CD8-positive, alpha-beta T cell (primary cell): ENCODE measurements at regions of chr19 and their contacts with region 1.

Region 1: GRCh38 chr19:3062168-3063102 is at the start of gene TLE5:
- DNase-seq: peak; percentile 46 to 88 (median 72)
- ATAC-seq: peak; percentile 46
- H3K4me3 ChIP-seq: peak within 1 kb of the TSS; percentile 92 to 95
- H3K4me3 Mint-ChIP-seq: peak within 1 kb of the TSS; percentile 92
- H3K27ac ChIP-seq: peak within 1 kb of the TSS; percentile 81 to 83
- H3K27ac Mint-ChIP-seq: peak within 1 kb of the TSS; percentile 87
- H3K4me1 ChIP-seq: peaks cover 51% of the 10 kb centered on the region
- H3K4me1 Mint-ChIP-seq: peaks cover 35% of the 10 kb centered on the region
- H3K27me3 ChIP-seq: no peaks in the 10 kb centered on the region
- H3K27me3 Mint-ChIP-seq: no peaks in the 10 kb centered on the region
- CTCF ChIP-seq: no peak
- total RNA-seq, gene TLE5: 637 to 677 TPM

Region 2: DNA sequence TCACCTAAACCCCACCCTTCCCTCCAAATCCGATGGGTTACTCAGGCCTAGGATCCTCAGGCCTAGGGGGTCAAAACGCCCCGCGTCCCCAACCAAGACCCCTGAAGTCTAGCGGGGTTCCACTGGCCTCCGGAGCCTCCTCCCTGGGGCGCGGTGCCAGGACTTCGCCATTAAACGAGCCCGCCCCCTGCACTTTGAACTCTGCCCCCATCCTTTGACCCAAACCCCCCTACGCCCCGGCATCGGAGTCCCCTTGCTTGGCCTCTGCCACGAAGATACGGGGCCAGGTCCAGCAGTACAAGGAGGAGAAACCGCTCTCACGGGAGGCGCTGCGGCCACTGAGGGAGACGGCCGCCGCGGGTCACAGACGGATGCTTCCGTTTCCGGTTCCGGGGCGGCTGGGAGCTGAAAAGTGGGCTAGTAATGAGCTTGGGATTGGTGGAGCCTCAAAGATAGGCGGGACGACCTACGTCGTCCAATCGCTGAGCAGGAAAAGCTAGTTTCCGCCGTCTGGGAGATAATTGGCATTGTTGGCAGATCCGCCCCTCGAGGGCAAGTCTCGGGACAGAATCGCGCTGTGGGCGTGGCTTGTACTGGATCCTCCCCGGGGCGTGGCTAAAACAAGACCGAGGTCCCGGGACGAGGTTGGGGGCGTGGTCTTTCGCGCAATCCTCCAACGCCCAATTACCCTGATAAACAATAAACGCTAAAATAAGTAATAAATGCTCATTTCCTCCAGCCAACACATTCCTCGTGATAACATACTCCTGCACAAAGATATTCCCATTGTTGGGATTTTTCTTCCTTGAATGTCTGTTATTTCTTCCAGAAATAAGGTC is 111.9 kb before region 1 on chr19:
- CTCF ChIA-PET with region 1: interaction called, 6 read pairs
- POLR2A ChIA-PET with region 1: interaction called, 7 read pairs
- intact Hi-C with region 1: loop called (anchors 1 to 2 kb)
- DNase-seq: peak; percentile 100
- ATAC-seq: peak; percentile 93
- H3K4me3 ChIP-seq: peak overlapping the region; percentile 77 to 80
- H3K4me3 Mint-ChIP-seq: peak overlapping the region; percentile 97
- H3K27ac ChIP-seq: peak overlapping the region; percentile 78 to 97
- H3K27ac Mint-ChIP-seq: peak overlapping the region; percentile 98
- H3K4me1 ChIP-seq: peaks cover 12% of the 10 kb centered on the region
- H3K4me1 Mint-ChIP-seq: peaks cover 32% of the 10 kb centered on the region
- H3K27me3 ChIP-seq: no peaks in the 10 kb centered on the region
- H3K27me3 Mint-ChIP-seq: no peaks in the 10 kb centered on the region
- CTCF ChIP-seq: no peak

Region 3: DNA sequence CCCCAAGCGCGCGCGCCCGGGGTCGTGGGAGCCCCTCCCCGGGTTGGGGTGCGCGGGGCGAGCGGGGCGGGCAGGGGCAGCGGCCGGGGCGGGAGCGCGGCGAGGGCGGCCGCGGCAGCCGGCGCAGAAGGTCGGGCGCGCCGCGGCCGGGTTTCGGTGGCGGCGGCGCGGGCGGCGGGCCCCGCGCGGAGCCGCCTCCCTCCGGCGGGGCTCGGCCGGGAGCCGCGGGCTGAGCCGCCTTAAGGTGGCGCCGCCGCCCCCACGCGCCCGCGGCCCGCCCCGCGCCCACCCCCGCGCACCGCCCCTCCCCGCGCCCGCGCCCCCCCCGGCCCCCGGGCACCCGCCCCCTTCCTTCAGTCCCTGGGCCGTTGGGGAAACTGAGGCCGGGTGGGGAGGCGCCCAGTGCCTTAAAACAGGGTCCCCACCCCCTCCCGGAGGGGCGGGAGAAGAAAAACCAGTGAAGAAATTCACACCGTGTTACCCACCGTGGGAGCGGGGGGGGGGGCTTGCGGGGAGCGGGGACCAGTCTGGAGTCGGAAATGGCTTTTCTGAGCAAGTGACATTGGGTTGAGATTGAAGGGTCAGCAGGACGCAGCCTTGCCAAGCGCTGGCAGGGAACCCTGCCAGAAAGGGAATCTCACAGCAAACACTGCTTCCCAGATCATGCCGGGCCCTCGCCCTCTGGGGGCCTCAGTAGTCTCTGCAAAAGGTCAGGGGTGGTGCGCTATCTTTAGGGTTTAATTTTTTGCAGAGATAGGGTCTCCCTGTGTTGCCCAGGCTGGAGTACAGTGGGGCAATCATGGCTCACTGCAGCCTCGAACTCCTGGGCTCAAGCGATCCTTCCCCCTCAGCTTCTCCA is 33.1 kb before region 1 on chr19 and contains the start of gene TLE2:
- CTCF ChIA-PET with region 1: interaction called, 3 read pairs
- POLR2A ChIA-PET with region 1: interaction called, 8 read pairs
- intact Hi-C with region 1: loop called in 1 of 2 experiments (anchors 5 kb)
- DNase-seq: peak in 2 of 9 experiments; percentile 58 to 63
- ATAC-seq: peak; percentile 69
- H3K4me3 ChIP-seq: peak within 1 kb of the TSS; percentile 57 to 60
- H3K4me3 Mint-ChIP-seq: peak within 1 kb of the TSS; percentile 82
- H3K27ac ChIP-seq: peak within 1 kb of the TSS in 1 of 2 experiments; percentile 37
- H3K27ac Mint-ChIP-seq: peak within 1 kb of the TSS; percentile 67
- H3K4me1 ChIP-seq: peaks cover 31% of the 10 kb centered on the region
- H3K4me1 Mint-ChIP-seq: peaks cover 27% of the 10 kb centered on the region
- H3K27me3 ChIP-seq: no peaks in the 10 kb centered on the region
- H3K27me3 Mint-ChIP-seq: no peaks in the 10 kb centered on the region
- CTCF ChIP-seq: no peak
- total RNA-seq, gene TLE2: 12.1 to 15.4 TPM

Region 4: GRCh38 chr19:3047425-3048189 is 14.8 kb before region 1 on chr19:
- CTCF ChIA-PET with region 1: interaction called, 7 read pairs
- POLR2A ChIA-PET with region 1: interaction called, 35 read pairs
- intact Hi-C with region 1: loop called (anchors 1 to 2 kb)
- DNase-seq: peak in 8 of 9 experiments; percentile 44 to 81 (median 72)
- ATAC-seq: peak; percentile 94
- H3K4me3 ChIP-seq: peak overlapping the region; percentile 41 to 43
- H3K4me3 Mint-ChIP-seq: peak overlapping the region; percentile 89
- H3K27ac ChIP-seq: no peak overlapping the region
- H3K27ac Mint-ChIP-seq: peak overlapping the region; percentile 93
- H3K4me1 ChIP-seq: peaks cover 14% of the 10 kb centered on the region
- H3K4me1 Mint-ChIP-seq: peaks cover 20% of the 10 kb centered on the region
- H3K27me3 ChIP-seq: no peaks in the 10 kb centered on the region
- H3K27me3 Mint-ChIP-seq: no peaks in the 10 kb centered on the region
- CTCF ChIP-seq: no peak

Region 5: DNA sequence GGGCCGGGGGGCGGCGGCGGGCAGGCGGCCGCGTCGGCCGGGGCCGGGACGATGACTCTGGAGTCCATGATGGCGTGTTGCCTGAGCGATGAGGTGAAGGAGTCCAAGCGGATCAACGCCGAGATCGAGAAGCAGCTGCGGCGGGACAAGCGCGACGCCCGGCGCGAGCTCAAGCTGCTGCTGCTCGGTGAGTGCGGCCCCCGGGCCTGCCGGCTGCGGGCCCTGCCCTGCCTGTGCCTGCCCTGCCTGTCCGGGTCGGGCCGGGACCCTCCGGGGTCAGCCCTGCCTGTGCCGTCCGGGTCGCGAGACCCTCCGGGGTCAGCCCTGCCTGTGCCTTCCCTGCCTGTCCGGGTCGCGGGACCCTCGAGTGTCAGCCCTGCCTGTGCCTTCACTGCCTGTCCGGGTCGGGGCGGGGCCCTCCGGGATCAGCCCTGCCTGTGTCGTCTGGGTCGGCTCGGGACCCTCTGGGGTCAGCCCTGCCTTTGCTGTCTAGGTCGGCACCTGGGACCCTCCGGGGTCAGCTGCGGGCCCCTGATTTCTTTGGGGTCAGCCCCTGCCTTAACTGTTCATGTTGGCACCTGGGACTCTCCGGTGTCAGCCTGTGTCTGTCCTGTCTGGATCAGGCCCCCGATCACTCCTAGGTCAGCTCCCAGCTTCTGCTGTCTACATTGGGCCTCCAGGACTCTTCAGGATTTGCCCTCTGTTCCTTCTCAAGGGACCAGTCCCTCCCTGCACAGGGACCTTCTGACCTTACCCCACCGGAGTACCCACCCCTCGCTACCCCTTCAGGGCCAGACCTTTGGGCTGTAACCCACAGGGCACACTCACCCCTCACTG is 32.4 kb after region 1 on chr19:
- CTCF ChIA-PET with region 1: no interaction called
- POLR2A ChIA-PET with region 1: no interaction called
- intact Hi-C with region 1: loop called in 1 of 2 experiments (anchors 2 kb)
- DNase-seq: peak in 4 of 9 experiments; percentile 43 to 59 (median 58)
- ATAC-seq: peak; percentile 6
- H3K4me3 ChIP-seq: peak overlapping the region; percentile 34 to 62
- H3K4me3 Mint-ChIP-seq: peak overlapping the region; percentile 77
- H3K27ac ChIP-seq: no peak overlapping the region
- H3K27ac Mint-ChIP-seq: peak overlapping the region; percentile 60
- H3K4me1 ChIP-seq: peaks cover 42% of the 10 kb centered on the region
- H3K4me1 Mint-ChIP-seq: peaks cover 24% of the 10 kb centered on the region
- H3K27me3 ChIP-seq: peaks cover 0 to 20% of the 10 kb centered on the region in 2 experiments
- H3K27me3 Mint-ChIP-seq: peaks cover 6% of the 10 kb centered on the region
- CTCF ChIP-seq: no peak

Region 6: GRCh38 chr19:3122958-3123721 is 60.7 kb after region 1 on chr19:
- CTCF ChIA-PET with region 1: no interaction called
- POLR2A ChIA-PET with region 1: no interaction called
- intact Hi-C with region 1: no loop called
- DNase-seq: no peak
- ATAC-seq: no peak
- H3K4me3 ChIP-seq: no peak overlapping the region
- H3K4me3 Mint-ChIP-seq: no peak overlapping the region
- H3K27ac ChIP-seq: no peak overlapping the region
- H3K27ac Mint-ChIP-seq: no peak overlapping the region
- H3K4me1 ChIP-seq: no peaks in the 10 kb centered on the region
- H3K4me1 Mint-ChIP-seq: no peaks in the 10 kb centered on the region
- H3K27me3 ChIP-seq: peaks cover 0 to 3% of the 10 kb centered on the region in 2 experiments
- H3K27me3 Mint-ChIP-seq: peaks cover 2% of the 10 kb centered on the region
- CTCF ChIP-seq: no peak

Region 7: GRCh38 chr19:3163230-3163886 is 100.9 kb after region 1 on chr19:
- CTCF ChIA-PET with region 1: no interaction called
- POLR2A ChIA-PET with region 1: no interaction called
- intact Hi-C with region 1: no loop called
- DNase-seq: peak; percentile 46 to 85 (median 75)
- ATAC-seq: peak; percentile 97
- H3K4me3 ChIP-seq: no peak overlapping the region
- H3K4me3 Mint-ChIP-seq: no peak overlapping the region
- H3K27ac ChIP-seq: no peak overlapping the region
- H3K27ac Mint-ChIP-seq: peak overlapping the region; percentile 14
- H3K4me1 ChIP-seq: no peaks in the 10 kb centered on the region
- H3K4me1 Mint-ChIP-seq: peaks cover 14% of the 10 kb centered on the region
- H3K27me3 ChIP-seq: no peaks in the 10 kb centered on the region
- H3K27me3 Mint-ChIP-seq: no peaks in the 10 kb centered on the region
- CTCF ChIP-seq: peak; percentile 89

Region 8: DNA sequence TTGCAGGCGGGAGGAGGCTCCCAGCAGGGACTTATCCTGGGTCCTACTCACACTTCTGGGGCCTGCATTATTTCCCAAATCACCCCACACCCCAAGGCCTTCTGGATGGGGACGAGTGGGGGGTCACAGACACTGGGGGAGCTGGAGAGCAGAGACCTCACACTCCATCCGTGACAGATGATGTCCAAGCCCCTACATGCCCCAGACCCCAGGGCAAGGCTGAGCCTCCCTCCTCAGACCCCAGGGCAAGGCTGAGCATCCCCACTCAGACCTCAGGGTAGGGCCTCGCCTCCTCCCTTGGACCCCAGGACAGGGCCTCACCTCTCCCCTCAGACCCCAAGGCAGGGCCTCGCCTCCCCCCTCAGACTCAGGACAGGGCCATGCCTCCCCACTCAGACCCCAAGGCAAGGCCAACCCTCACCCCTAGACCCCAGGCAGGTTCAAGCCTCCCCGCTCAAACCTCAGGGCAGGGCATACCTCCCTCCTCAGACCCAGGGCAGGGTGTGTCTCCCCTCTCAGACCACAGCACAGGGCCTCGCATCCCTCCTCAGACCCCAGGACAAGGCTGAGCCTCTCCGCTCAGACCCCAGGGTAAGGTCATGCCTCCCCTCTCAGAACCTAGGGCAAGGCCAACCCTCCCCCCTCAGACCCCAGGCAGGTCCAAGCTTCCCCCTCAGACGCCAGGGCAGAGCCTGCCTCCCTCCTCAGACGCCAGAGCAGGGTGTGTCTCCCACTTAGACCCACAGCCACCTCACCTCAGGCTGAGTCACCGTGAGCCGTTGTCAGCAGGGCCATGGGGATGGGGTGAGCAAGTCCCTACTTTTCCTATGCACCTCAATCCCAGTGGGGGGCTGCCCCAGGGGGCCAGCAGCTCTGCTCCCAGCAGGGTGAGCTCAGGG is 114.4 kb after region 1 on chr19:
- CTCF ChIA-PET with region 1: no interaction called
- POLR2A ChIA-PET with region 1: interaction called, 3 read pairs
- intact Hi-C with region 1: loop called in 1 of 2 experiments (anchors 2 kb)
- DNase-seq: peak; percentile 43 to 86 (median 82)
- ATAC-seq: peak; percentile 68
- H3K4me3 ChIP-seq: peak overlapping the region; percentile 45 to 66
- H3K4me3 Mint-ChIP-seq: peak overlapping the region; percentile 62
- H3K27ac ChIP-seq: peak overlapping the region; percentile 62 to 90
- H3K27ac Mint-ChIP-seq: peak overlapping the region; percentile 98
- H3K4me1 ChIP-seq: peaks cover 26% of the 10 kb centered on the region
- H3K4me1 Mint-ChIP-seq: peaks cover 26% of the 10 kb centered on the region
- H3K27me3 ChIP-seq: no peaks in the 10 kb centered on the region
- H3K27me3 Mint-ChIP-seq: no peaks in the 10 kb centered on the region
- CTCF ChIP-seq: no peak

Region 9: DNA sequence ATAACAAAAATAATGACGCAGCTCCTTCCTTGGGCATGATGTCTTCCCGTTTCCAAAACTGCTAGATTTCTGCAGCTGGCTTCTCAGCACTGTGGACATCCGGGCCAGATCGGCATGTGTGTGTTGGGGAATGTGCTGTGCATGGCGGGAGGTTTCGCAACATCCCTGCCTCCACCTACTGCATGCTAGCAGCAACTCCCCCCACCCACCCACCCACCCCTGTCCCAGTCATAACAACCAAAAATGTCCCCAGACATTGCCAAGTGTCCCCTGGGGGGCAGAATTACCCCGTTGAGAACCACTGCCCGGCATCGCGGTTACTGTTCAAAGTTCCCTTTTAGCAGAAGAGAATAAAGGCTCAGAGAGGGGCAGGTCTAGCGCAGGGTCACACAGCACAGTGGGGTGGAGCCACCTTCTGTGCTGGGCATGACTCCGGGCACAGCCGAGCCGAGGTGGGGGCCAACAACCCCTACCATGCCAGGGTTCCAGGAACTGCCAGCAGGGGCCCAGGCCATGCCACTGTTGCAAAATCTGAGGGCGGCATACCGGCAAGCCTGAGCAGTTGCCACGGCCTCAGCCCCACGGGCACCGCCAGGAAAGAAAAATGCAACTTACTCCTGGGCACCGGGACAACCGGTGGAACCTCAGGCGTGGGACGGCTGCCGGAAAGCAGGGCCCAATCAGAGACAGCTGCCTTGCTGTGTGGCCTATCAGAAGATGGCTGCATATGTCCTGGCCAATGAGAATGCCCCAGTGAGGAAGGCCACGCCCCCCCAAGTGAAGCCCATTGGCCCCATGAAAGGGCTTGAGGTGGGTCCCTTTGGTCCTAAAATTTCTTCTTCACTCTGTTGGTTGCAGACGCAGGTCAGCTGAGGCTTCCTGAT is 281.4 kb after region 1 on chr19:
- CTCF ChIA-PET with region 1: no interaction called
- POLR2A ChIA-PET with region 1: no interaction called
- intact Hi-C with region 1: no loop called
- DNase-seq: peak in 5 of 9 experiments; percentile 27 to 74 (median 60)
- ATAC-seq: peak; percentile 93
- H3K4me3 ChIP-seq: peak overlapping the region; percentile 27 to 39
- H3K4me3 Mint-ChIP-seq: peak overlapping the region; percentile 64
- H3K27ac ChIP-seq: no peak overlapping the region
- H3K27ac Mint-ChIP-seq: peak overlapping the region; percentile 60
- H3K4me1 ChIP-seq: peaks cover 5% of the 10 kb centered on the region
- H3K4me1 Mint-ChIP-seq: peaks cover 8% of the 10 kb centered on the region
- H3K27me3 ChIP-seq: no peaks in the 10 kb centered on the region
- H3K27me3 Mint-ChIP-seq: no peaks in the 10 kb centered on the region
- CTCF ChIP-seq: no peak